Activated naive CD4-positive, alpha-beta T cell treated with anti-CD3 and anti-CD28 coated beads for 36 hours (primary cell): ENCODE measurements at regions of chr17 and their contacts with region 1.

Region 1: DNA sequence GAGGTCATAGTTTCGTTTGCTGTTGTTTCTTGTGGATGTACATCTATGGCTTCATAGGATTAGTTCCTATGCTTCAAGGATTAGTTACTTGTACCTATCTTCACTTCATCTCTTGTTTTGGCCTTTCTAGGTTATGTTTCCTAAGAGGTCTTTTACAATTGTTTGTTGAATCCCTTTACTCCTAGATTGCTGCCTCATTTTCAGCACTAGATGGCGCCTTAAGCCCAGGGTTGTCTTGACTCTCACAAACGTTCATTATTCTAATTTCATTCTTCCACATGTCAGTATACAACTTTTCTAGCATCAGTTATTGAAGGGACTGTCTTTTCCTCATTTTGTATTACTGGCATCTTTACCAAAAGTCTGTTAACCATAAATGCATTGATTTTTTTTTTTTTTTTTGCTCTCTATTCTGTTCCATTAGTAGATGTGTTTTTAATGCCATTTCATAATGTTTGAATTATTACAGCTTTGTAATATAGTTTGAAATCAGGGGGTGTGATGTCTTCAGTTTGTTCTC is 45.0 kb upstream of the NACA2 start:
- DNase-seq: peak; percentile 78
- H3K4me3 Mint-ChIP-seq: no peak overlapping the region
- H3K27ac Mint-ChIP-seq: no peak overlapping the region
- H3K4me1 Mint-ChIP-seq: no peaks in the 10 kb centered on the region
- H3K27me3 Mint-ChIP-seq: peaks cover 41% of the 10 kb centered on the region

Region 2: GRCh38 chr17:61837175-61838051 is 201.4 kb after region 1 on chr17:
- CTCF ChIA-PET with region 1: interaction called, 5 read pairs
- intact Hi-C with region 1: loop called (anchors 1 kb)
- DNase-seq: peak; percentile 63
- H3K4me3 Mint-ChIP-seq: no peak overlapping the region
- H3K27ac Mint-ChIP-seq: no peak overlapping the region
- H3K4me1 Mint-ChIP-seq: no peaks in the 10 kb centered on the region
- H3K27me3 Mint-ChIP-seq: no peaks in the 10 kb centered on the region

Region 3: DNA sequence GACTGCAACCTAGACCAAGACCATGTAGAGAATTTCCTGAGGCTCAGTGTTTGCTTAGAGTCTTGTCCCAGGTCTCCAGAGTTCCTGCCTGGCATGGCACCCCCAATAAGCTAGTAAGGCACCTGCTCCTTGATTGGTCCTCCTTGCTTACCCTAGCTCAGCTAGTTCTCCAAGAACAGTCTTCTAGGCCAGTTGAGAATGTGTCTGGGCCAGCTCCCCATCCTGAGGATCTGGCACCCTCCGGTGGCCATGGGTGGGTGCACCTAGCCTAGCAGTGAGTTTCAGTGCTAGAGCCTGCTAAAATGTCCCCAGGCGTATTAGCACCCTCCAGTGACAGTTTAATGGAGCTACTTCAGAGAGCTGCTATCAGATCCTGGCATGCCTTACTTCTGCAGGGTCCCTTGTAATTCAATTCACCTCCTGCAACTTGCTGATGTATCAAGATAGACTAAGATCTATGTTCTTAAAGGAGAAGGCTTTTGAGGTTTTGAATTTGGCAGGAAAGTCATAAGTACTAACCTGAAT is 473.5 kb after region 1 on chr17:
- CTCF ChIA-PET with region 1: interaction called, 12 read pairs
- intact Hi-C with region 1: loop called (anchors 1 kb)
- DNase-seq: peak; percentile 78
- H3K4me3 Mint-ChIP-seq: no peak overlapping the region
- H3K27ac Mint-ChIP-seq: no peak overlapping the region
- H3K4me1 Mint-ChIP-seq: no peaks in the 10 kb centered on the region
- H3K27me3 Mint-ChIP-seq: no peaks in the 10 kb centered on the region

Region 4: DNA sequence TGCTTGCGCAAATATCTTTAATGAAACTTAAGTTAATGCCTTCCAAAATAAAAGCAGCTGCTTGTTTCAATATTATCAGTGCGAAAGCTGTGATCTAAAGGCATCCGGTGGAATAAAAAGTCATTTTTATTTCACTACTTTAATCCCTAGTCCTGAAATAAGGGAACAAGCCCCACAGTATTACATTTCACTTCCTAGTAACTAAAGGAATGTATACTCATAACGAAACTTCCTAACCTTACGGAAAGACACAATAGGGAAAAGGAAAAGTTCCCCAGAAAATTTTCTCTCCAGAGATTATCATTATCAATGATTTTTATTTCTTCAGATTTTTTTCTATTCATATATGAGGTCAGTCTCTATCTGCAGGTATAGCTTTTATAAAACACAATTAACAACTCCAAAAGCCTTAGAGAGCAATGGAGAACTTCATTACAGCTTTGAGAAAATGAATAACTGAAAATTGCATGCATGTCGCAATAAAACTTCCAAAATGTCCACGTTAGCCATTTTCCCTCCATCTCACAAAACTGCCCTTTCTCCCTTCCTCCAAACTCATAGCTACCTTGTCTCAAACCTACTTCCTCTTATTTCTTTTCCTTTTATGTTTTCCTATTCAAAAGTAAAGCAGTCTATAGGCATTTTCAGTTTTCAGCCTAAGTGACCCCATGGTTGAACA is 583.4 kb after region 1 on chr17:
- CTCF ChIA-PET with region 1: interaction called, 3 read pairs
- intact Hi-C with region 1: loop called (anchors 10 kb)
- DNase-seq: no peak
- H3K4me3 Mint-ChIP-seq: no peak overlapping the region
- H3K27ac Mint-ChIP-seq: no peak overlapping the region
- H3K4me1 Mint-ChIP-seq: no peaks in the 10 kb centered on the region
- H3K27me3 Mint-ChIP-seq: no peaks in the 10 kb centered on the region

Region 5: DNA sequence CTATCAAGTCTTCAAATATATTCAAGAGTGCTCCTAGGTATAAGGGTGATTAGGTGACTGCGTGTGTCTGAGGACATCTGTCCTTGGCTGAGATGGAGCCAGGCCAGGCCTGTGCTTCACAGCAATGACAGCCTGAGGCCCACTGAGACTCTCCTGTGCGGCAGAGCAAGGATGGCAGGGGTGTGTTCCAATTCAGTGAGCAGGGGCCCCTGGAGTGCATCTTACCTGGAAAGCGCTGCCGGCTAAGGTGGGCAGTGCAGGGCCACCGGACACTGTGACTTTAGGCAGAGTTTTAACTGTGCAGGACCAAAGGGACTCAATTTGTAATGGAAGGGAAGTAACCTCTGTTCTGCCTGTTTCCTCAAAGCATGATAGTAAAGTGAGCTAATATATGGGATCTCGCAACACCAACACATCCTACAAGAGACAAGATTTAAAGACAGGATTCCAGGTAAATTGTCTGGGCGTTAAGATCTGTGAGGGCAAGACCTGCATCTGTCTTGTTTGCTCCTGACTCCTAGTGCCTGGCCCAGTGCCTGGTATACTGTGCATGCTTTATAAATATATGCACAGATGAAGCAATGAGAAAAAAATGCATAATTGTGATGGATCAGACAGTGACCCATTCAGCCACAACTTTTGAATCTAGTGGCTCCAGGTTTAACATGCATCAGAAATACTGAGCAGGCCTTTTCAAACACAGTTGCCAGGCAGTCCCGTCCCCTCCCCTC is 1078.2 kb after region 1 on chr17:
- CTCF ChIA-PET with region 1: no interaction called
- intact Hi-C with region 1: no loop called
- DNase-seq: no peak
- H3K4me3 Mint-ChIP-seq: no peak overlapping the region
- H3K27ac Mint-ChIP-seq: no peak overlapping the region
- H3K4me1 Mint-ChIP-seq: peaks cover 6% of the 10 kb centered on the region
- H3K27me3 Mint-ChIP-seq: no peaks in the 10 kb centered on the region